Activated CD8-positive, alpha-beta T cell treated with anti-CD3 and anti-CD28 coated beads, Interleukin-2, amount 10 ng/mL, durations not matched to agents 7 days and 5 days (primary cell): ENCODE measurements at regions of chr6 and their contacts with region 1.

Region 1: GRCh38 chr6:116680975-116681808 is at the start of gene KPNA5:
- DNase-seq: peak; percentile 95
- ATAC-seq: peak; percentile 96
- H3K4me3 Mint-ChIP-seq: peak within 1 kb of the TSS; percentile 97
- H3K27ac Mint-ChIP-seq: peak within 1 kb of the TSS; percentile 98
- H3K4me1 Mint-ChIP-seq: peaks cover 21% of the 10 kb centered on the region
- H3K27me3 Mint-ChIP-seq: no peaks in the 10 kb centered on the region
- total RNA-seq, gene KPNA5: 9.8 to 11.0 TPM

Region 2: GRCh38 chr6:116450769-116451740 is 230.1 kb before region 1 on chr6:
- CTCF ChIA-PET with region 1: no interaction called
- POLR2A ChIA-PET with region 1: no interaction called
- DNase-seq: no peak
- ATAC-seq: no peak
- H3K4me3 Mint-ChIP-seq: no peak overlapping the region
- H3K27ac Mint-ChIP-seq: no peak overlapping the region
- H3K4me1 Mint-ChIP-seq: peaks cover 38% of the 10 kb centered on the region
- H3K27me3 Mint-ChIP-seq: peaks cover 16% of the 10 kb centered on the region

Region 3: DNA sequence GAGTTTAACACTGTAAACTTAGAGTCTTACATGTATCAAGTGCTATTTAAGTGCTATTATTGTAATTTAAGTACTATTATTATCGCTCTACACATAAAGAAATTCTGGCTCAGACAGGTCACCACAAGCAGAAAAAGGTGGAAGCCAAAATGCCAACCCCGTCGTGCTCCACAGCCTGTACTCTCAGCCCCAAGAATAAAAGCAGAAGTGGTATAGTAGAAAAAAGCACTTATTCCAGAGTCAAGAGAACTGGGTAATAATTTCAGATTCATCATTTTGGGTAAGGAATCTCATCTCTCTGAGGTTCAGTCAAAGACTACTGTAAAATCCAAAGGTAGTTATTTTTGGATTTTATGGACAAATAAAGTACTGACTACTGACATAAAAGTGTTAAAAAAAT is 13.6 kb before region 1 on chr6:
- CTCF ChIA-PET with region 1: interaction called, 6 read pairs
- POLR2A ChIA-PET with region 1: interaction called, 12 read pairs
- DNase-seq: no peak
- ATAC-seq: no peak
- H3K4me3 Mint-ChIP-seq: peak overlapping the region; percentile 100
- H3K27ac Mint-ChIP-seq: peak overlapping the region; percentile 98
- H3K4me1 Mint-ChIP-seq: peaks cover 40% of the 10 kb centered on the region
- H3K27me3 Mint-ChIP-seq: peaks cover 13% of the 10 kb centered on the region